PC-9 (cell line): ENCODE measurements at regions of chr6 and their contacts with region 1.

Region 1: DNA sequence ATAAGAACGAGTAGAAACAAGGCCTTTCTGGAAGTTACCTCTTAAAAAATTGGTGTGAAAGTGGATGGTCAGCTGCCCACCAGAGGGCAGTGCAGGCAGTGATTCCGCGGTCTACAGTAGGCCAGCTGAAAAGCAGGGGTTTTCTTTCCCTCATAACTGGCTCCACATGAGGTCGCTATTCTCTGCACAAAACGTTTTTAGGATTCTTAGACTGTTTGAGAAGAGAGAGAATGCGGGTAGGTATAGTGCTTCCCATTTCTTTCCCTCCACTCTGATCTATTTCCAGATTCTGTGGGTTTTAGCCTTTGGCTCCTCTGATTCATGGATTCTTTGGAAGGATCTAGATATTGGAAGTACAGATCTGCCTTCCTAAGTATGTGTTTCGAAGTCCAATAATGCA is 14.2 kb downstream of the FIG4 start:
- DNase-seq: peak; percentile 76 to 77
- H3K4me3 ChIP-seq: no peak overlapping the region
- H3K27ac ChIP-seq: no peak overlapping the region
- H3K4me1 ChIP-seq: peaks cover 6% of the 10 kb centered on the region; the same call in 1 of the 2 replicates
- H3K27me3 ChIP-seq: no peaks in the 10 kb centered on the region
- CTCF ChIP-seq: peak; percentile 98

Region 2: GRCh38 chr6:109526905-109527628 is 178.2 kb before region 1 on chr6:
- CTCF ChIA-PET with region 1: no interaction called
- POLR2A ChIA-PET with region 1: no interaction called
- intact Hi-C with region 1: loop called (anchors 1 kb)
- DNase-seq: peak; percentile 33 to 55
- H3K4me3 ChIP-seq: no peak overlapping the region
- H3K27ac ChIP-seq: no peak overlapping the region
- H3K4me1 ChIP-seq: no peaks in the 10 kb centered on the region
- H3K27me3 ChIP-seq: no peaks in the 10 kb centered on the region
- CTCF ChIP-seq: peak; percentile 80

Region 3: GRCh38 chr6:109595998-109596397 is 109.3 kb before region 1 on chr6:
- CTCF ChIA-PET with region 1: no interaction called
- POLR2A ChIA-PET with region 1: no interaction called
- intact Hi-C with region 1: loop called (anchors 1 kb)
- DNase-seq: peak in 1 of 2 experiments; percentile 3
- H3K4me3 ChIP-seq: no peak overlapping the region
- H3K27ac ChIP-seq: no peak overlapping the region
- H3K4me1 ChIP-seq: no peaks in the 10 kb centered on the region
- H3K27me3 ChIP-seq: 0 out of 2 replicates have a peak, but pooled peaks cover 7% of the 10 kb centered on the region
- CTCF ChIP-seq: peak; percentile 79

Region 4: GRCh38 chr6:109660526-109661320 is 44.5 kb before region 1 on chr6:
- CTCF ChIA-PET with region 1: no interaction called
- POLR2A ChIA-PET with region 1: no interaction called
- intact Hi-C with region 1: no loop called
- DNase-seq: no peak
- H3K4me3 ChIP-seq: no peak overlapping the region
- H3K27ac ChIP-seq: no peak overlapping the region
- H3K4me1 ChIP-seq: no peaks in the 10 kb centered on the region
- H3K27me3 ChIP-seq: no peaks in the 10 kb centered on the region
- CTCF ChIP-seq: no peak

Region 5: GRCh38 chr6:109720311-109720710 is 15.1 kb after region 1 on chr6:
- CTCF ChIA-PET with region 1: no interaction called
- POLR2A ChIA-PET with region 1: no interaction called
- intact Hi-C with region 1: no loop called
- DNase-seq: no peak
- H3K4me3 ChIP-seq: no peak overlapping the region
- H3K27ac ChIP-seq: no peak overlapping the region
- H3K4me1 ChIP-seq: no peaks in the 10 kb centered on the region
- H3K27me3 ChIP-seq: no peaks in the 10 kb centered on the region
- CTCF ChIP-seq: no peak

Region 6: GRCh38 chr6:110389689-110390382 is 684.6 kb after region 1 on chr6:
- CTCF ChIA-PET with region 1: interaction called, 10 read pairs
- POLR2A ChIA-PET with region 1: no interaction called
- intact Hi-C with region 1: loop called (anchors 2 kb)
- DNase-seq: no peak
- H3K4me3 ChIP-seq: no peak overlapping the region
- H3K27ac ChIP-seq: no peak overlapping the region
- H3K4me1 ChIP-seq: no peaks in the 10 kb centered on the region
- H3K27me3 ChIP-seq: no peaks in the 10 kb centered on the region
- CTCF ChIP-seq: no peak